A673 (cell line): ENCODE measurements at regions of chr6 and their contacts with region 1.

Region 1: GRCh38 chr6:51541847-51542246 is 545.6 kb downstream of the PKHD1 start:
- DNase-seq: peak; percentile 58
- H3K4me3 ChIP-seq: no peak overlapping the region
- H3K27ac ChIP-seq: no peak overlapping the region
- H3K4me1 ChIP-seq: no peaks in the 10 kb centered on the region
- H3K27me3 ChIP-seq: peaks cover 12% of the 10 kb centered on the region
- CTCF ChIP-seq: peak; percentile 32; the same call in 1 of the 2 replicates

Region 2: DNA sequence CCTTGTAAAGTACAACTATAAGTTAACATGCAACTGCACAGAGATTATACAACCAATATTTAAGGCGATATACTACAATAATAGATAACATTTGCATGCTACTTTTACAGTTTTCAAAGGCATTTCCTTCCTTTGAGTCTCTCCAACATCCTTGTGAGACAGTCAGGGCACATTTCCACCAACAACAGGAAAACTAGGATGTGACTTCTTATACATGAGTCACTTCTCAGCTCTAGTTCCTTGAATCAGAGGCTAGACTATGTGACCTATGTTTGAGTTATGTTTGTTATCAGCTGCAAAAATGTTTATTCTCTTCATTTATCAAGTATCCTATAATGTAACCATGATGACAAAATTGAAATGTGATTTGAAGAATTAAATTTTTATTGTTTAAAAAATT is 880.2 kb before region 1 on chr6:
- CTCF ChIA-PET with region 1: no interaction called
- POLR2A ChIA-PET with region 1: no interaction called
- intact Hi-C with region 1: loop called (anchors 10 kb)
- DNase-seq: no peak
- H3K4me3 ChIP-seq: no peak overlapping the region
- H3K27ac ChIP-seq: no peak overlapping the region
- H3K4me1 ChIP-seq: no peaks in the 10 kb centered on the region
- H3K27me3 ChIP-seq: peaks cover 4% of the 10 kb centered on the region
- CTCF ChIP-seq: no peak

Region 3: GRCh38 chr6:51365566-51365965 is 176.3 kb before region 1 on chr6:
- CTCF ChIA-PET with region 1: no interaction called
- POLR2A ChIA-PET with region 1: no interaction called
- intact Hi-C with region 1: no loop called
- DNase-seq: no peak
- H3K4me3 ChIP-seq: no peak overlapping the region
- H3K27ac ChIP-seq: no peak overlapping the region
- H3K4me1 ChIP-seq: no peaks in the 10 kb centered on the region
- H3K27me3 ChIP-seq: no peaks in the 10 kb centered on the region
- CTCF ChIP-seq: no peak

Region 4: GRCh38 chr6:51569594-51569993 is 27.7 kb after region 1 on chr6:
- CTCF ChIA-PET with region 1: no interaction called
- POLR2A ChIA-PET with region 1: no interaction called
- intact Hi-C with region 1: no loop called
- DNase-seq: peak; percentile 2
- H3K4me3 ChIP-seq: no peak overlapping the region
- H3K27ac ChIP-seq: no peak overlapping the region
- H3K4me1 ChIP-seq: no peaks in the 10 kb centered on the region
- H3K27me3 ChIP-seq: no peaks in the 10 kb centered on the region
- CTCF ChIP-seq: peak; percentile 24; the same call in 1 of the 2 replicates

Region 5: GRCh38 chr6:51959744-51960383 is 418.0 kb after region 1 on chr6:
- CTCF ChIA-PET with region 1: no interaction called
- POLR2A ChIA-PET with region 1: no interaction called
- intact Hi-C with region 1: loop called (anchors 10 kb)
- DNase-seq: peak; percentile 79
- H3K4me3 ChIP-seq: no peak overlapping the region
- H3K27ac ChIP-seq: no peak overlapping the region
- H3K4me1 ChIP-seq: no peaks in the 10 kb centered on the region
- H3K27me3 ChIP-seq: no peaks in the 10 kb centered on the region
- CTCF ChIP-seq: peak; percentile 92